ENCODE measurements at regions of chrX and their contacts with region 1.

Region 1: GRCh38 chrX:8404438-8404837 is 60.2 kb upstream of the VCX3B start:
- DNase-seq: no peak
- H3K4me3 ChIP-seq: no peak overlapping the region
- CTCF ChIP-seq: no peak
- POLR2A ChIP-seq: no peak

Region 2: DNA sequence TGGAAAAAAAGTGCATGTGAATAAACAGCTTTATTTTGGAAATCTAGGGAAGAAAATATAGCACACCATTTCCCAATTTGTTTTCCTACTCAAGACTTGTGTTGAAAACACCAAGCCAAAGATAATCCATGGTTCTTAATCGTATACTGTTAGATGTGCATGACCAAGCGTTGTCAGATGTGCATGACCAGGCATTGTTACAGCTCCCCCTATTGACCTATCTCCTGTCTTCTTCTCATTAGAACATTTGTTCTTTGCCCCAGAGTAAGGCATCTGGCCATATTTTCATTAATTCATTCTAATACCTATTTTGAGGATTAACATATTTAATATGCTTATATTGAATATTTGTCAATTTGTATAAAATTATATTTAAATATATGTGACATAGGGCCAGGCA is 575.8 kb before region 1 on chrX:
- intact Hi-C with region 1: loop called (anchors 5 kb)
- DNase-seq: no peak
- H3K4me3 ChIP-seq: no peak overlapping the region
- CTCF ChIP-seq: no peak
- POLR2A ChIP-seq: no peak

Region 3: DNA sequence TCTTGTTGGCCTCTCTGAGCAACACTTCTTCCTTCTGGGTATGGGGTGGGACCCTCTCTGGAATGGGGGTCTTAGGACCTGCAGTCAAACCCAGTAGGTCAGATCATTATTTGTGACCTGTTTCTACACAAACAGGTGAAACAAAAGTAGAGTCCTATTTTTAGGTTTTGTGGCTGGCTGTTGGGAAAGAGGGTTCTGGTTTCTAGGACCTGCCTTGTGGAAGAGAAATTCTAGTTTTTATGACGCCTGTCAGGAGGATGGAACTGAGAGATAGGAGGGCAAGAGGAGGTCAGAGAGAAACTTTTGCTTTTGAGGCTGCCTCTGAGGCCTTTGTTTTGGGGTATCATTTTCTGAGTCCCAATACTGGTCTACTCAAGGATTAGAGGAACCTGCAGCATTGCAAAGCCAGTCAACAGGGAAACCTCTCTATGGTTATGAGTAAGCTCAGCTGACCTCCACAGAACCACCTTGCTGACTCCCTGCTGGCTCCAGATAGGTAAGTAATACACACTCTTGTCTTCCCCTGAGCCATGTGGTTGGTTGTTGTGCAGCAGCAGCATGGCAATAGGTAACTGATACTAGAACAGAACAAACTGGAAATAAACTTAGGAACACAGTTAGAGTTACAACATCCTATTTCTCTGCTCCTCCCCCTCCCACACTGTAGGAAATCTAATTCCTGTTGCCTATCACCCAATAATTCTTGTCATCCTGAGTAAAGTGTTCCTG is 54.5 kb before region 1 on chrX:
- intact Hi-C with region 1: loop called (anchors 2 kb)
- DNase-seq: no peak
- H3K4me3 ChIP-seq: no peak overlapping the region
- CTCF ChIP-seq: no peak
- POLR2A ChIP-seq: no peak